SK-N-SH (cell line): ENCODE measurements at regions of chr17 and their contacts with region 1.

Region 1: GRCh38 chr17:78250891-78251794 is 19.7 kb downstream of the TMEM235 start:
- DNase-seq: peak; percentile 99
- H3K4me3 ChIP-seq: peak overlapping the region; percentile 10 to 40; a peak in 2 of 4 replicates
- H3K27ac ChIP-seq: peak overlapping the region in 1 of 2 experiments; percentile 82; a peak in 2 of 4 replicates
- H3K4me1 ChIP-seq: peaks cover 0 to 63% of the 10 kb centered on the region in 2 experiments; a peak in 1 of 4 replicates
- H3K27me3 ChIP-seq: no peaks in the 10 kb centered on the region
- CTCF ChIP-seq: peak; percentile 100
- EP300 ChIP-seq: no peak
- RAD21 ChIP-seq: peak; percentile 99

Region 2: GRCh38 chr17:78005452-78006171 is 245.5 kb before region 1 on chr17:
- CTCF ChIA-PET with region 1: no interaction called
- POLR2A ChIA-PET with region 1: no interaction called
- DNase-seq: no peak
- H3K4me3 ChIP-seq: no peak overlapping the region
- H3K27ac ChIP-seq: no peak overlapping the region
- H3K4me1 ChIP-seq: peaks cover 8 to 26% of the 10 kb centered on the region in 2 experiments; a peak in 3 of 4 replicates
- H3K27me3 ChIP-seq: no peaks in the 10 kb centered on the region
- CTCF ChIP-seq: no peak
- EP300 ChIP-seq: no peak
- RAD21 ChIP-seq: no peak

Region 3: GRCh38 chr17:78112518-78113226 is 138.5 kb before region 1 on chr17:
- CTCF ChIA-PET with region 1: interaction called, 86 read pairs
- POLR2A ChIA-PET with region 1: interaction called, 3 read pairs
- DNase-seq: peak; percentile 98
- H3K4me3 ChIP-seq: no peak overlapping the region
- H3K27ac ChIP-seq: no peak overlapping the region
- H3K4me1 ChIP-seq: peaks cover 0 to 14% of the 10 kb centered on the region in 2 experiments; a peak in 1 of 4 replicates
- H3K27me3 ChIP-seq: 0 out of 2 replicates have a peak, but pooled peaks cover 6% of the 10 kb centered on the region
- CTCF ChIP-seq: peak; percentile 100
- EP300 ChIP-seq: no peak
- RAD21 ChIP-seq: peak; percentile 96

Region 4: GRCh38 chr17:78176548-78177025 is 74.6 kb before region 1 on chr17:
- CTCF ChIA-PET with region 1: interaction called, 59 read pairs
- POLR2A ChIA-PET with region 1: no interaction called
- DNase-seq: peak; percentile 90
- H3K4me3 ChIP-seq: peak overlapping the region in 1 of 2 experiments; percentile 25; a peak in 1 of 4 replicates
- H3K27ac ChIP-seq: no peak overlapping the region
- H3K4me1 ChIP-seq: peaks cover 5 to 8% of the 10 kb centered on the region in 2 experiments; a peak in 2 of 4 replicates
- H3K27me3 ChIP-seq: no peaks in the 10 kb centered on the region
- CTCF ChIP-seq: peak; percentile 93
- EP300 ChIP-seq: no peak
- RAD21 ChIP-seq: peak; percentile 74

Region 5: DNA sequence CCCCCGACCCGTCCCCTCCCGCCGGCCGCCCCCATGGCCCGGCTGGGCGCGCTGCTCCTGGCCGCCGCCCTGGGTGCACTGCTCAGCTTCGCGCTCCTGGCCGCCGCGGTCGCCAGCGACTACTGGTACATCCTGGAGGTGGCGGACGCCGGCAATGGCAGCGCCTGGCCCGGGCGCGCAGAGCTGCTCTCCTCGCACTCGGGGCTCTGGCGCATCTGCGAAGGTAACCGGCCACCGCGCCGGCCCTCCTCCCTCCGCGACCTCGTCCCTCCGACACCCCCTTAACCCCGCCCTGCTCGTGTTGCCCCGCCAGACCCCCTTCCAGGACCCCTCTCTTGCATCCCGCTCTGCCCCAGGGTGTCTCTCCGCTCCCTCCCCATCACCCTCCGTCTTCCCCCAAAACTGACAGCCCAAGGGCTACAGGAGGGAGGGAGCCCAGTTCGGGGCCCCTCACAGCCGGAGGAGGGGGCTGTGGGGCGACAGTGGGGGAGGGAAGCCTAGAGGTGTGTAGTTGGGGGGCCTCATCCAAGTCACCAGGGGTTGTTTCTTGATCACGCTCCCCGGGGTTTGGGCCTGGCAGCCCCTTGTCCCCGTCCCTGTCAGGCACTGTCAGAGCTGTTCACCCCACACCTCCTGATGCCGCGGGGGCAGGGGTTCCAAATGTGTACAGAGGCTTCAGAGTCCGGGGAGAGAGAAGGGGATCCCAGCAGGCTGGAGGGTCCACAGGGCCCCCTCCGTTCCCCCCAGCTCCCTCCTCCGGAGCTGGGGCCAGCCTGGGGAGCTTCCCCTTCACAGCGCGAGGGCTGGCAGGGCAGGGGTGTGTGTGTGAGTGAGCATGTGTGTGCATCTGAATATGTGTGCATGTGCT is 18.9 kb before region 1 on chr17:
- CTCF ChIA-PET with region 1: interaction called, 196 read pairs
- POLR2A ChIA-PET with region 1: interaction called, 7 read pairs
- DNase-seq: peak; percentile 85
- H3K4me3 ChIP-seq: no peak overlapping the region
- H3K27ac ChIP-seq: no peak overlapping the region
- H3K4me1 ChIP-seq: peaks cover 0 to 22% of the 10 kb centered on the region in 2 experiments; a peak in 1 of 4 replicates
- H3K27me3 ChIP-seq: peaks cover 21% of the 10 kb centered on the region
- CTCF ChIP-seq: no peak
- EP300 ChIP-seq: no peak
- RAD21 ChIP-seq: no peak

Region 6: DNA sequence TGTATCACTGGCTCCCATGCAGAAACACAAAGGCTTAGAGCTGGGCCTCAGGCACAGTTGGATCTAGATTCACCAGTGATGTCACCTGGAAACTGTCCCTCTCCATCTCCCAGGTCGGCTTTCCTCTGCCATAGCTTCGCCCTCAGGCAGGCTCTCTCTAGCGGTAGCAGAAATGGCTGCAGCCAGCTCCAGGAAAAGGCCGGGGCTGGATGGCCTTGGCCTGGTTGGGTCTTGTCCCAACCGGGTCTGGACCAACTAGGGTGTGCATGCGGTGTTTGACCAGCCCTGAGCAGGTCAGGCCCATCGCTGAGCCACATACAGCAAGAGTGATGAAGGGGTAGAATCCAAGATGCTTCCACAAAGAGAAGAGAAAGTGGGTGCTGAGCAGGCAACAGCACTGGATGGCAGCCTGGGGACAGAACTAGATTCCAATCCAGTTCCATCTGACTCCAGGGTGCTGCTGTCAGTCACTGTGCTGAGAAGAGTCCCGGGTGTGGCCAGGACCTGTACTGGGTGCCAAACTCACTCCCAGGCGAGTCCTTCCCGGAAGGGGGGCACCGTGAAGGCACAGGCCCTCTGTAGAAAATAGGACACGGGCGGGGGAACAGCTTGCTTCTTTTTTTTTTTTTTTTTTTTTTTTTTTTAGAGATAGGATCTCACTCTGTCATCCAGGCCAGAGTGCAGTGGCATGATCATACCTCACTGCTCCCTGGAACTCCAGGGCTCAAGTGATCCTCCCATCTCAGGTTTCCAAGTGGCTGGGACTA is 56.9 kb after region 1 on chr17:
- CTCF ChIA-PET with region 1: interaction called, 18 read pairs
- POLR2A ChIA-PET with region 1: no interaction called
- DNase-seq: peak; percentile 51
- H3K4me3 ChIP-seq: no peak overlapping the region
- H3K27ac ChIP-seq: no peak overlapping the region
- H3K4me1 ChIP-seq: peaks cover 0 to 7% of the 10 kb centered on the region in 2 experiments; a peak in 1 of 4 replicates
- H3K27me3 ChIP-seq: no peaks in the 10 kb centered on the region
- CTCF ChIP-seq: no peak; the same call in 1 of the 2 replicates
- EP300 ChIP-seq: no peak
- RAD21 ChIP-seq: no peak

Region 7: DNA sequence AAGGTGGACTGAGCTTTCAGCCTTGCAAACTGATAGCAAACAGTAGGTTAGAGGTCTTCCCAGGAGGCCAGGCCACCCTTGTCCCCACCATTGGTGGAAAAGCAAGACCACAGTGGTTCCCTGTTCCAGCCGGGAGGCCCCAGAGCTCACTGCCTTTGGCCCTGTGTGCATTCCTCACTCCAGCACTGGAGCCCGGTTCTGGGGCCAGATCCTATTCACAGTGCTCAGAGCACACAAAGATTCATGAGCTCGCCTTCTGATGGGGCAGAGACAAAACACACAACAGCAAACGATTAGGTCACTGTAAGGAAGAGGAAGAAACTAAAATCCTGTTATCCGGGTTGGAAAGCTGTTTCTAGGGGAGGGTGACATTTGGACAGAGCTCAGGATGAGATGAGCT is 121.7 kb after region 1 on chr17:
- CTCF ChIA-PET with region 1: interaction called, 55 read pairs
- POLR2A ChIA-PET with region 1: no interaction called
- DNase-seq: no peak
- H3K4me3 ChIP-seq: no peak overlapping the region
- H3K27ac ChIP-seq: no peak overlapping the region
- H3K4me1 ChIP-seq: peaks cover 26 to 30% of the 10 kb centered on the region in 2 experiments; a peak in 3 of 4 replicates
- H3K27me3 ChIP-seq: no peaks in the 10 kb centered on the region
- CTCF ChIP-seq: no peak
- EP300 ChIP-seq: no peak
- RAD21 ChIP-seq: no peak